Activated CD4-positive, alpha-beta T cell treated with anti-CD3 and anti-CD28 coated beads, Interleukin-2, amount 10 ng/mL, durations not matched to agents 24 days and 14 days (primary cell): ENCODE measurements at regions of chr1 and their contacts with region 1.

Region 1: DNA sequence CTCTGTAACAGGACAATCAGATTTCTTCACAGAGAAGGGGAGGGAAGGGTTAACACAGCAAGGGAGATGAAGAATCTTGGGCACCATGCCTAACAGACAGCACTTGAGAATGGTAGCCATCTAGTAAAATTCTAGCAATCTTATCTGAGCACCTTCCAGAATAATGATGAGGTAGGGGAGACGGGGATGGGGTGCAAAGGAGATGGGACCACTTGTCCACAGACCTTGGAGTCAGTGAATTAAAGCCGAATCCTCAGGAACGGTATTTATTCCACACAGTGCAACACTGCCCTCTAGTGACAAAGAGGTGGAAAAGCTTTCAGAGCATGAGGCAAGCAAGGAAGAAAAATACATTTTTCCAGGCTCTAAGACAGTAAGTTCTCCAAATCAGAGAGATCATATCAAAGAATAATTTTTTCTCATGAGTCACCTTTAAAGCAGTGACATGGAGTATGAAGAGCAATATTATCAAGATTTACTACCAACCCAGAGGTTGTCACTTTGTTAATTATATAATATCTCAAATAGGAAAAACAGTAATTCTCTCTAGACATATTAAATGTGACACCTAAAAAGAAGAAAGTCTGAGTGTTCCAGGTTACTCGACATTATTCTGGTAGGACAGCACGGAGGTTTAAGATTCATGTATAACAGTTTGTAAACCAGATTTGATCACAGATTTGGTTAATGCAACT is 43.3 kb upstream of the LPAR3 start:
- DNase-seq: peak; percentile 82
- H3K4me3 Mint-ChIP-seq: no peak overlapping the region
- H3K27ac Mint-ChIP-seq: no peak overlapping the region
- H3K4me1 Mint-ChIP-seq: peaks cover 4% of the 10 kb centered on the region
- H3K27me3 Mint-ChIP-seq: no peaks in the 10 kb centered on the region

Region 2: GRCh38 chr1:84442256-84442655 is 494.0 kb before region 1 on chr1:
- intact Hi-C with region 1: loop called (anchors 10 kb)
- DNase-seq: peak; percentile 80
- H3K4me3 Mint-ChIP-seq: peak overlapping the region; percentile 28
- H3K27ac Mint-ChIP-seq: peak overlapping the region; percentile 69
- H3K4me1 Mint-ChIP-seq: peaks cover 16% of the 10 kb centered on the region
- H3K27me3 Mint-ChIP-seq: peaks cover 15% of the 10 kb centered on the region

Region 3: DNA sequence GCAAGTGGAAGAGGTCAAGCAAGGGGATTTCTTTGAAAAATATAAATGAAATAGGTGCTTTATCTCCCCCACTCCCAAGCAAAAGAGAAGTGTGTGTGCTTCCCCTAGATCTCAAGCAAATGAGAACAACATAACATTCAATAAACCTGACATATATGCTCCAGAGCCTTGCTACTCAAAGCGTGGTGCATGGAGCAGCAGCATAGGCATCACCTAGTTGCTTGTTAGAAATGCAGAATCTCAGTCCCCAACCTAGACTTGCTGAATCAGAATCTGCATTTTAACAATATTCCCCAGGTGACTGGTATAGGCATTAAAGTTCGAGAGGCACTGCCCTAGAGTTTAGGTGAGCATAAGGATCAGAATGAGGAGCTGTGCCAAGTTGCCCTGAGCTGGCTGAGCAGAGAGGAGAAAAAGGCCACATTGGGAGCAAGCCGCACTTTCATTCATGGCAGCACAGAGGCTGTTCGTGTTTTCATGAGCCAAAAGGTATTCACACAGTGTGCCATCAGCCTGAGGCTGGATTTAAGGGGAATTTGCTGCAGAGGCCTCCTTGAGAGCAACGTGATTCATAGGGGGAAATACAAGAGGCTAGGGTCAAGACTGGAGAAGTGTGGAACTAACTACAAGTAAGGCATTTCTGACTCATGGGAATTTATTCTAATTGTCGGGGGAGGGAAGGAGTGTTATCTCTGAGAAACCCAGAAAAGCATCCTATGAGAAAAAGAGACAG is 29.0 kb before region 1 on chr1:
- intact Hi-C with region 1: no loop called
- DNase-seq: peak; percentile 38
- H3K4me3 Mint-ChIP-seq: no peak overlapping the region
- H3K27ac Mint-ChIP-seq: no peak overlapping the region
- H3K4me1 Mint-ChIP-seq: peaks cover 5% of the 10 kb centered on the region
- H3K27me3 Mint-ChIP-seq: peaks cover 32% of the 10 kb centered on the region

Region 4: DNA sequence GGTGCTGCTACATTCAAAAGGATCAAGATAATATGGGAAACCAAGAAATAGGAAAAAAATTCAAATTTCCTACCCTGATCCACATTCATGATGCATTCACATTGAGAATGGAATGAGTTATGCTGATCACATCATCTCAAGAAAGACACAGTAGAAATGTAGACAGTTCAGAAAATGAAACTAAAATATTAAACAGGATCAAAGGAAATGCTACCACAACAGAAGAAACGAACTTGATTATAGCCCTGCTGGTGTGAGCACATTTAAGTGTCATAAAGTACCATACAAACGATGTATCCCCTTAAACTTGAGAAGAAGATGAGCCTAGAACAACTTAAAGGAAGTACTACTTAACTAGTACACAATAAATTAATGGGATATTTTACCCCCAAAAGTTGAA is 243.3 kb after region 1 on chr1:
- intact Hi-C with region 1: no loop called
- DNase-seq: peak; percentile 61
- H3K4me3 Mint-ChIP-seq: peak overlapping the region; percentile 2
- H3K27ac Mint-ChIP-seq: no peak overlapping the region
- H3K4me1 Mint-ChIP-seq: peaks cover 10% of the 10 kb centered on the region
- H3K27me3 Mint-ChIP-seq: no peaks in the 10 kb centered on the region